H1 (cell line): ENCODE measurements at regions of chr12 and their contacts with region 1.

Region 1: DNA sequence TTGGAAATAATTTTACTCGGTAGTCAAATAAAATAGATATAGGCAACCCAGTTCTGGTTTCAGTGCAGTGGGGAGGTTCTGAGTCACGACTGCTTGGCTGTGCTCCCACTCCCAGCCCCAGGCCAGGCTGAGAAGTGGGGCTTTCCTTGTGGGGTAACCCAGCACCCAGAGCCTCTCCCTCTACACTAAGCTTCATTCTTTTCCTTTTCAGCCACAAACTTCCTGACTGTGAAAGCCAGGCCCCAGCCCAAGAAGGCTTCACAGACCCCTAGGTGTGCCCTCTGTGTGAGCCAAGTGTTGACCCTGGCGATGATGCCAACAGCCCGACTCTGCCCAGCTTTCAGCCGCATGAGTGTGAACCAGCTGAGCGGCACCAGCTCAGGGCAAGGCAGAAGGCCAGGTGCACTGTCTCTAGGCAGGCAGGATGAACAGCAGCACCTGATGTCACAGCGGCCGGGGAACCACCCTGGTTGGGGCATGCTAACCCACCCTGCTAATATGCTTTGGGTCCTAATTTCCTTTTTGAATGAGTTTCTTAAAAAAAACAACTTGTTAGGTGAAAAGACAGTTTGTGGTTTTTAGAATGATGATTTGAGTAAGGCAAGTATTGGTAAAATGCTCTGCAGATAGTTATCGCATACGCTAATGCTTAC is 42.2 kb upstream of the ATP23 start:
- DNase-seq: no peak
- H3K4me3 ChIP-seq: no peak overlapping the region
- H3K27ac ChIP-seq: no peak overlapping the region
- H3K4me1 ChIP-seq: peaks cover 9 to 20% (median 13%) of the 10 kb centered on the region in 4 experiments
- H3K27me3 ChIP-seq: peaks cover 0 to 10% (median 8%) of the 10 kb centered on the region in 4 experiments; a peak in 4 of 7 replicates
- CTCF ChIP-seq: no peak
- EP300 ChIP-seq: no peak
- POLR2A ChIP-seq: no peak
- RAD21 ChIP-seq: no peak

Region 2: DNA sequence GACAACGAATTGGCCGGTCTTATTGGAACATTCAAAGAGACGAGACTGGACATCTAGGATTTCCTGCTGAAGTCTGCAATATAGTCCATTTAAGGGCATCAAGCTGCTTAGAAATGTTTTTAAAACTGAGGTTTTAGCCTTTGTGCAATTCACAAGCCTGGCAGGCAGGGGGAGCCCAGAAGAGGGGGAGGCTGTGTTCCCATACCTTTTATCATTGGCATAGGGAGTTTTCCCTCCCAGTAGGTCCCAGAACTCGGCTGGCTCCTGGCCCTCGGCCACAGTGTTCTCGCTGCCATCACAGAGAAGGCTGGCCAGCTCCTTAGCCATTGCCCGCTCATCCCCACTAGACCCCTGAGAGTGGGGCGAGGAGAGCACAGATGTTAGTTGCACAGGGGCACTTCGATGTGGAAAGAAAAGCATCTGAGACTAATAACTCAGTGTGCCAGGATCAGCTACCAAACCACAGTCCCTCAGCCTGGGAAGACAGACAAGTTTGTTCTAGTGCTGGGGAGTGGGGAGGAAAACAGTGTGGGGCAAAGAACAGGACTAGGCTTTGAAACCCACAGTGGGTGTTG is 95.7 kb before region 1 on chr12:
- CTCF ChIA-PET with region 1: interaction called, 44 read pairs
- POLR2A ChIA-PET with region 1: interaction called, 4 read pairs
- DNase-seq: peak; percentile 31 to 76
- H3K4me3 ChIP-seq: no peak overlapping the region
- H3K27ac ChIP-seq: no peak overlapping the region
- H3K4me1 ChIP-seq: peaks cover 0 to 2% (median under 1%) of the 10 kb centered on the region in 4 experiments; a peak in 1 of 7 replicates
- H3K27me3 ChIP-seq: no peaks in the 10 kb centered on the region
- CTCF ChIP-seq: peak; percentile 73 to 92 (median 78)
- EP300 ChIP-seq: no peak
- POLR2A ChIP-seq: no peak
- RAD21 ChIP-seq: peak; percentile 64 to 72

Region 3: GRCh38 chr12:57829025-57829777 is 69.9 kb before region 1 on chr12:
- CTCF ChIA-PET with region 1: interaction called, 181 read pairs
- POLR2A ChIA-PET with region 1: interaction called, 62 read pairs
- DNase-seq: no peak
- H3K4me3 ChIP-seq: no peak overlapping the region
- H3K27ac ChIP-seq: no peak overlapping the region; the same call in 1 of the 2 replicates
- H3K4me1 ChIP-seq: peaks cover 7 to 20% (median 9%) of the 10 kb centered on the region in 4 experiments
- H3K27me3 ChIP-seq: no peaks in the 10 kb centered on the region
- CTCF ChIP-seq: no peak
- EP300 ChIP-seq: no peak
- POLR2A ChIP-seq: no peak
- RAD21 ChIP-seq: no peak

Region 4: GRCh38 chr12:57852620-57853500 is 46.3 kb before region 1 on chr12:
- CTCF ChIA-PET with region 1: interaction called, 49 read pairs
- POLR2A ChIA-PET with region 1: interaction called, 181 read pairs
- DNase-seq: peak; percentile 80 to 85
- H3K4me3 ChIP-seq: peak overlapping the region; percentile 23 to 57 (median 44); a peak in 7 of 8 replicates
- H3K27ac ChIP-seq: peak overlapping the region; percentile 33; the same call in 1 of the 2 replicates
- H3K4me1 ChIP-seq: peaks cover 15 to 28% (median 22%) of the 10 kb centered on the region in 4 experiments
- H3K27me3 ChIP-seq: peaks cover 0 to 3% (median 1%) of the 10 kb centered on the region in 4 experiments; a peak in 2 of 7 replicates
- CTCF ChIP-seq: peak; percentile 17 to 24 (median 23)
- EP300 ChIP-seq: peak in 1 of 2 experiments; percentile 8; a peak in 1 of 3 replicates
- POLR2A ChIP-seq: peak in 1 of 2 experiments; percentile 66; a peak in 2 of 3 replicates
- RAD21 ChIP-seq: peak; percentile 27 to 44

Region 5: GRCh38 chr12:57881475-57881874 is 17.7 kb before region 1 on chr12:
- CTCF ChIA-PET with region 1: interaction called, 19 read pairs
- POLR2A ChIA-PET with region 1: interaction called, 19 read pairs
- DNase-seq: no peak
- H3K4me3 ChIP-seq: no peak overlapping the region
- H3K27ac ChIP-seq: no peak overlapping the region
- H3K4me1 ChIP-seq: no peaks in the 10 kb centered on the region
- H3K27me3 ChIP-seq: no peaks in the 10 kb centered on the region
- CTCF ChIP-seq: no peak
- EP300 ChIP-seq: no peak
- POLR2A ChIP-seq: no peak
- RAD21 ChIP-seq: no peak